Calu3 (cell line): ENCODE measurements at regions of chr17 and their contacts with region 1.

Region 1: GRCh38 chr17:38674749-38675615 is at the start of gene EPOP:
- DNase-seq: peak; percentile 100
- H3K4me3 Mint-ChIP-seq: peak within 1 kb of the TSS; percentile 66
- H3K27ac Mint-ChIP-seq: peak within 1 kb of the TSS; percentile 31
- H3K4me1 Mint-ChIP-seq: peaks cover 34% of the 10 kb centered on the region
- H3K27me3 Mint-ChIP-seq: peaks cover 72% of the 10 kb centered on the region
- CTCF ChIP-seq: no peak
- total RNA-seq, gene EPOP: 15.3 and 20.9 TPM in 2 replicates

Region 2: GRCh38 chr17:38729886-38730525 is 55.0 kb after region 1 on chr17 and contains the start of gene CISD3:
- CTCF ChIA-PET with region 1: interaction called, 84 read pairs
- intact Hi-C with region 1: loop called (anchors 1 kb)
- DNase-seq: peak; percentile 100
- H3K4me3 Mint-ChIP-seq: peak within 1 kb of the TSS; percentile 90
- H3K27ac Mint-ChIP-seq: peak within 1 kb of the TSS; percentile 85
- H3K4me1 Mint-ChIP-seq: peaks cover 48% of the 10 kb centered on the region
- H3K27me3 Mint-ChIP-seq: no peaks in the 10 kb centered on the region
- CTCF ChIP-seq: peak; percentile 100
- total RNA-seq, gene CISD3: 101 and 109 TPM in 2 replicates

Region 3: GRCh38 chr17:38735161-38735997 is 60.4 kb after region 1 on chr17:
- CTCF ChIA-PET with region 1: interaction called, 84 read pairs
- intact Hi-C with region 1: loop called (anchors 1 kb)
- DNase-seq: peak; percentile 93
- H3K4me3 Mint-ChIP-seq: no peak overlapping the region
- H3K27ac Mint-ChIP-seq: peak overlapping the region; percentile 15
- H3K4me1 Mint-ChIP-seq: peaks cover 44% of the 10 kb centered on the region
- H3K27me3 Mint-ChIP-seq: no peaks in the 10 kb centered on the region
- CTCF ChIP-seq: peak; percentile 100

Region 4: GRCh38 chr17:38853292-38854219 is 178.6 kb after region 1 on chr17 and contains the start of gene RPL23:
- CTCF ChIA-PET with region 1: no interaction called
- intact Hi-C with region 1: loop called (anchors 10 kb)
- DNase-seq: peak; percentile 100
- H3K4me3 Mint-ChIP-seq: peak within 1 kb of the TSS; percentile 93
- H3K27ac Mint-ChIP-seq: peak within 1 kb of the TSS; percentile 100
- H3K4me1 Mint-ChIP-seq: peaks cover 60% of the 10 kb centered on the region
- H3K27me3 Mint-ChIP-seq: no peaks in the 10 kb centered on the region
- CTCF ChIP-seq: no peak
- total RNA-seq, gene RPL23: 3,443 and 3,829 TPM in 2 replicates